Ovary (tissue), 10 donors: ENCODE measurements at regions of chr22 and their contacts with region 1.

Region 1: DNA sequence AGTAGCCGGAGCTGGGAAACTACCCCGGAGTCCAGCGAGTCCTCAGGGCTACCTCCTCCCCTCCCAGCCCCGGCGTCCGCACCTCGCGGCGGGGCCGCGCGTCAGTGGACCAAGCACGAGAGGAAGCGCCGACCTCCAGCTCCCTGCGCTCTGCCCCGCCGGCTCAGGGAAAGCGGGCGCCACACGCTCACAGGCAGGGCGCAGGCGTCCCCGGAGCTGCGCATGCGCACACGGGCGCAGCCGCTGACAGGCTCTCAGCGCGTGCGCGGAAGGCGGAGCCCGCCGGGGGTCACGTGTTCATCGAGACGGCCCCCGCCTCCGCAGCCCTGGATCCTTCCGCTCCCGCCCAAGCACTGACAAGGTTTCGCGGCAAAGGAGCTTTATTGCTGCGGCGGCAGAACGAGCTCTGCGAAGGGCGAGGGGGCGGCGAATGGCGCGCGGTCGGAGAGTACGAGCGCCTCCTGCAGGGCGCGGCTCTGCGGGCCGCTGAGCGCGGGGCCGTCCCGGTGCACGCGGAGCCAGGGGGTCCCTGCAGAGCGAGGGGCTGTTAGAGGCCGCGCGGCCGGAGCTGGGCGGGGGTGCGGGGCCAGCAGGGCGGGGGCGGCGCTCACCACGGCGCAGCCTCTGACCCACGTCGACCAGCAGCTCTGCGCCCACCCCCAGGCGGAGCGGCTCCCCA is at the start of gene SCO2:
- DNase-seq: peak; percentile 96 to 98 (median 98)
- H3K4me3 ChIP-seq: peak within 1 kb of the TSS; percentile 55
- H3K27ac ChIP-seq: peak within 1 kb of the TSS; percentile 29 to 87
- H3K4me1 ChIP-seq: peaks cover 15% of the 10 kb centered on the region
- H3K27me3 ChIP-seq: no peaks in the 10 kb centered on the region
- CTCF ChIP-seq: peak; percentile 14 to 65 (median 58)
- EP300 ChIP-seq: no peak
- POLR2A ChIP-seq: peak; percentile 56
- total RNA-seq, gene SCO2: 0.73 to 5.1 (median 2.6) TPM in 4 of 7 donors, not detected in the others

Region 2: GRCh38 chr22:50244420-50245213 is 280.9 kb before region 1 on chr22 and contains the start of gene TUBGCP6:
- intact Hi-C with region 1: loop called in 1 of 4 experiments (anchors 10 kb)
- DNase-seq: peak; percentile 92 to 97 (median 95)
- H3K4me3 ChIP-seq: peak within 1 kb of the TSS; percentile 71
- H3K27ac ChIP-seq: peak within 1 kb of the TSS; percentile 50 to 82
- H3K4me1 ChIP-seq: peaks cover 10% of the 10 kb centered on the region
- H3K27me3 ChIP-seq: no peaks in the 10 kb centered on the region
- CTCF ChIP-seq: peak in 1 of 3 donors; percentile 66
- EP300 ChIP-seq: no peak
- POLR2A ChIP-seq: peak; percentile 91
- total RNA-seq, gene TUBGCP6: 35.9 to 52.2 (median 40.8) TPM

Region 3: DNA sequence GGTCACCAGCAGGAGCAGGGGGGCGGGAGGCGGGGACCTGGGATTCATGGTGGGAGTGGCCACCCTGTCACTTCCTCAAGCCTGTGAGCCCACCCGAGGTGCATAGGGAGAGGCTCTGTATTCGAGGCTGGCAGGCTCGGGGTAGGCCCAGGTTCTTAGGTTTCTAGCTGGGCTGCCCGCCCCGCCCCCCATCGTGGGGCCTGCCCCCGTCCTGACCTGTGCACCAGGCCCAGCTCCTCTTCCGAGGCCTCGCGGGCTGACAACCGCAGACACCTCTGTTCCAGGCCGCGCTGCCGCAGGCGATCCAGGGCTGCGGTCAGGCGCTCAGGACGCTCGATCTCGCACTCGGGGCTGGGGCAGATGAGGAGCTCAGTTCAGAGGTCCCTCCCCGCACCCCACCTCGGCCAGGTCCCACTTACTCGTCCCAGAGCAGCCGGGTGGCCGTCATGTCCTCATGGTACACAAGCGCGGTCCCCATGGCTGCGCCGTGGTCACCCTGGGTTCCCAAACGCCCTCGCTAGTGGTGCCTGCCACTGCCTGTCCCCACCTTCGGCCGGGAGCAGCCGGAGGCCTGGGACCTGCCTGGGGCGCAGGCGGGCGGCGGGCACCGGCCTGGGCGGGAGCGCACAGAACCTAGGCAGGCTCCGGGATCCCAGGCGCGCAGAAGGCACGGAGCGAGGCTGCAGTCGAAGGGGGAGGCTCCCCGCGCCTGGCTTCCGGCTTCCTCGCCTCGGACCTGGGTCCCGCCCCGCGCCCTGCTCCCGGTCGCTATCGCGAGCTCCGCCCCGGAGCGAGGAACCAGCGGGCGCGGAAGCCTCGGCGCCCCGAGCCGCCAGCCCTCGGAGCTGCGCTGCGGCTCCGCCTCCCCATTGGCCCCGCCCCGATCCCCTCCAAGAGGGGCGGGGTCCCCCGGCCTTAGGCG is 274.7 kb before region 1 on chr22 and contains the start of gene HDAC10:
- intact Hi-C with region 1: loop called in 2 of 4 experiments (anchors 10 kb)
- DNase-seq: peak; percentile 75 to 88 (median 81)
- H3K4me3 ChIP-seq: peak within 1 kb of the TSS; percentile 57
- H3K27ac ChIP-seq: peak within 1 kb of the TSS; percentile 2 to 44
- H3K4me1 ChIP-seq: peaks cover 7% of the 10 kb centered on the region
- H3K27me3 ChIP-seq: no peaks in the 10 kb centered on the region
- CTCF ChIP-seq: no peak
- EP300 ChIP-seq: no peak
- POLR2A ChIP-seq: no peak
- total RNA-seq, gene HDAC10: 24.9 to 44.6 (median 41.1) TPM